Activated B cell treated with CpG ODN at 0.5 μM for 24 hours (primary cell): ENCODE measurements at regions of chr6 and their contacts with region 1.

Region 1: DNA sequence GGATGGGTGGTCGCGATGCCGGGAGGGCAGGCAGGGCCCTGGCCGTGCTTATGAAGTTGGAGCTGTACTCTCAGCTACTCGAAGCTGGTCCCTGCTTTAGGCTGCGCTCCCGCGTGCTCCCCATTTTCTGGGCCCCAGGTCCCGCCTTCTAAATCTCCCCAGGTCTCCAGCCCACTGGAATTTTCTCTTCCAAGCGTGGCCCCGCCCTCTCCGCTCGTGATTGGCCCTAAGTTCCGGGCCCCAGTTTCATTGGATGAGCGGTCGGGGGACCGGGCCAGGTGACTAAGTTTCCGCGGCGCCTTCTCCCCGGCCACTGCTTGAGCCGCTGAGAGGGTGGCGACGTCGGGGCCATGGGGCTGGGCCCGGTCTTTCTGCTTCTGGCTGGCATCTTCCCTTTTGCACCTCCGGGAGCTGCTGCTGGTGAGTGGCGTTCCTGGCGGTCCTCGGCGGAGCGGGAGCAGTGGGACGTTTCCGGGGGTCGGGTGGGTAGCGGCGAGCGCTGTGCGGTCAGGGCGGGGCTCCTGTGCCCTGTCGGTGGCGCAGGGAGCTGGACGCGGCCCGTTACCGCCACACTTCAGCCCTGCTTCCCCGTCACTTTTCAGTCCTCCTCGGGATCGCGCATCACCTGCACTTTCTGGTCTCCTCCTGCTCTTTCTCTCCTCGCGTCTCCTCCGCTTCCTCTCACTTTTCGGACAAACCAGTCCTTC is at the start of gene MICA:
- DNase-seq: peak; percentile 63
- ATAC-seq: peak; percentile 65
- H3K4me3 Mint-ChIP-seq: peak within 1 kb of the TSS; percentile 91
- H3K27ac Mint-ChIP-seq: peak within 1 kb of the TSS; percentile 80
- H3K4me1 Mint-ChIP-seq: peaks cover 63% of the 10 kb centered on the region
- H3K27me3 Mint-ChIP-seq: no peaks in the 10 kb centered on the region
- CTCF ChIP-seq: no peak
- total RNA-seq, gene MICA: 8.9 and 9.0 TPM in 2 replicates

Region 2: GRCh38 chr6:31423550-31423949 is 20.1 kb after region 1 on chr6:
- CTCF ChIA-PET with region 1: no interaction called
- POLR2A ChIA-PET with region 1: interaction called, 3 read pairs
- intact Hi-C with region 1: loop called (anchors 2 kb)
- DNase-seq: no peak
- ATAC-seq: peak; percentile 28
- H3K4me3 Mint-ChIP-seq: peak overlapping the region; percentile 8
- H3K27ac Mint-ChIP-seq: peak overlapping the region; percentile 19
- H3K4me1 Mint-ChIP-seq: peaks cover 34% of the 10 kb centered on the region
- H3K27me3 Mint-ChIP-seq: no peaks in the 10 kb centered on the region
- CTCF ChIP-seq: no peak